Posterior vena cava (tissue), 2 donors: ENCODE measurements at regions of chr12 and their contacts with region 1.

Region 1: DNA sequence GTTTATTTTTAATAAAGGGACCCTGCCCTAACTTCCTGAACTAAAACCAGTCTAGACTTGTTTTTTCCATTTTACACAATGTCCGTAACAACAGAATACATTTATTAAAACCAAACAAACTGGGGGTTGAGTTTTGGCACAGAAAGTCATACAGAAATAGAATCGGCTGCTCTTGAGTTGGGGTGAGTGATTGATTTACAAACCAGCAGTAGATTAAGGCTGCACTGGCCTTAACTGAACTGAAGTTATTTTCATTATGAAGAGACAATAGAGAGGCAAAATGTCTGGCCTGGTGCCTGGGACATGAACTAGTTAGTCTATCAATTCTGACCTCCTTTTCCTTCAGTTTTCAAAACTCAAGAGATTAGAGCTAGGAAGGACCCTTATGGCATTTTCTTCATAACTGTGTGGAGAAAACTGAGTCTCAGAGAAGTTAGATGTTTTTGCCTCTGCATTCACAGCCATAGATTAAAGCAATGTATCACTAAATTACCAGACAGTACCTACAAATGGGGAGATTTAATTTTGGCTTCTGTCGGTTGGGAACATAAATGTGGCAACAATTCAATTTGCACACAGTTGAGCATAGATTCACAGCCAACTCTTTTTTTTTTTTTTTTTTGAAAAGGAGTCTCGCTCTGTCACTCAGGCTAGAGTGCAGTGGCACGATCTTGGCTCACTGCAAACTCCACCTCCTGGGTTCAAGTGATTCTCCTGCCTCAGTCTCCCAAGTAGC is 19.8 kb upstream of the MGP start:
- DNase-seq: no peak

Region 2: GRCh38 chr12:14185427-14186192 is 719.8 kb before region 1 on chr12:
- intact Hi-C with region 1: loop called in 1 of 2 experiments (anchors 5 kb)
- DNase-seq: no peak

Region 3: DNA sequence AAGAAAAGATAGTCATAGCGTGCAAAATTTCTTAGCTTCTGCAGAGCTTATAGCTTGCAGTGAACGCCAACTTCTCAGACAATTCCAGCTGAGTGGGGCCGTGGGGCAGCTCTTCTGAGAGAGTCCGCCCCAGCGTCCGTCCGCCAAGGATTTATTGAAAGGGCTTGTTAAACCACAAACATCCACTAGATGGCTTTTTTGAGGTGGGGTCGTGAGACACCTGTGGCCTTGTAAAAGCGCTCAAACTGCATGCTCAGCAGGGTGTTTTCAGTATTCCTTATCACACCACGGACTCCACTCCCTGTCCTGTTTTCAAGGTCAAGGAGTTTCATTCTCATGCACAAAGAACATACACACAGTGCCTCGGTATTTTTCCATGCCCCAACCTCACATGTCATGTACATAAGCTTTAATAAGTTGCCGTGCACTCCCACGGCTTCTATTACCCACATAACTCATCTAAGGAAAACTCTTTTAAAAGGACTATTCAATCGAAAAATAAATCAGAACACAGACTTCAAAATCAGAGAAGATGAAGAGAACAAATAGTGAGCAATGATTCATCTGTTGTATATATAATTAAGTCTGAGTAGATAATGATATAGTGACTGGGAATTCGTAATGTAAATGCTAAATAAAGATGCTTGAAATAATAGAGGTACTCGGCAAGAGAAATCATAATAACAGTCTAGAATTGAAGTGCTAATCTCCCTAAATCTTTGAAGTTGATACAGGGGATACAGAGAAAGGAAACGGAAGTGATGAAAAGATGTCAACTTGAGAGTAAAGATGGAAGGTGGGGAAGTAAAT is 148.9 kb before region 1 on chr12:
- intact Hi-C with region 1: no loop called
- DNase-seq: no peak

Region 4: DNA sequence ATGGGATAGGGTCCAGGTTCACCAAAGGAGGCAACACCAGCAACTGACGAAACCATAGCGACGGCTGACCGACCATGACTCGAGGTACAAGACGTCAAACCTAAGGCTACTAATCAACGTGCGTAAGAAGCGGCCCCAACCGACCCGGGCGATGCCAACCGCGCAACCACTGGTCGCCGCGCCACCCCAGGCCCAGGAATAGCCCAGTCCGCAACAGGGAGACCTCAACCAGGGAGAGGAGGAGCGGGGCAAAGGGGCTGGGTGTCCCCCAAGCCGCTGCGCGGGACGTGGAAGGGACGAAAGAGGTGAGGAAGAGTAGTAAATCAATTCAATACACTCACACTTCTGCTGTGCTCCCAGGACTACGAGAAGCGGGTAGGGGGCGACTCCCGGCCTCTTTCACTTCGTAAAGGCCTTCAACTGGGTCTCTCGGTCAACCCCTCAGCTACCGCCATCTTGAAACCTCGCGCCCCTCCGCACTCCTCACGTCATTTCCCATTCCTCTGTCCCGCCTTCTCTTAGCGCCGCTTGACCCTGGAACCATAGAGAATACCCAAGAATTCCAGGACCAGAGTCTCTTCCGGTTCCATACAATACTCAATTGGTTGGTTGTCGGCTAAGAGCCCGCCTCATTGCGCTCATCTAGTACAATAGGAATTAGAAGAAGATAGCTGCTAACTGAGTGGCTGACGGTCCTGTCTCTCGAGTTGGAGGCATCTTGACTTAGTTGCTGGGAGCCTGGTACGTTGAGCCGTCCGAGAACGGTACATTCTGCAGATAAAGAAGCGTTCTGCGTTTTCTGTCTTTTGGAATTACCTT is 102.2 kb before region 1 on chr12 and contains the starts of genes C12orf60 and WBP11:
- intact Hi-C with region 1: no loop called
- DNase-seq: peak; percentile 96
- total RNA-seq, gene C12orf60: 0.62 to 0.74 TPM
- total RNA-seq, gene WBP11: 37.2 to 39.2 TPM

Region 5: DNA sequence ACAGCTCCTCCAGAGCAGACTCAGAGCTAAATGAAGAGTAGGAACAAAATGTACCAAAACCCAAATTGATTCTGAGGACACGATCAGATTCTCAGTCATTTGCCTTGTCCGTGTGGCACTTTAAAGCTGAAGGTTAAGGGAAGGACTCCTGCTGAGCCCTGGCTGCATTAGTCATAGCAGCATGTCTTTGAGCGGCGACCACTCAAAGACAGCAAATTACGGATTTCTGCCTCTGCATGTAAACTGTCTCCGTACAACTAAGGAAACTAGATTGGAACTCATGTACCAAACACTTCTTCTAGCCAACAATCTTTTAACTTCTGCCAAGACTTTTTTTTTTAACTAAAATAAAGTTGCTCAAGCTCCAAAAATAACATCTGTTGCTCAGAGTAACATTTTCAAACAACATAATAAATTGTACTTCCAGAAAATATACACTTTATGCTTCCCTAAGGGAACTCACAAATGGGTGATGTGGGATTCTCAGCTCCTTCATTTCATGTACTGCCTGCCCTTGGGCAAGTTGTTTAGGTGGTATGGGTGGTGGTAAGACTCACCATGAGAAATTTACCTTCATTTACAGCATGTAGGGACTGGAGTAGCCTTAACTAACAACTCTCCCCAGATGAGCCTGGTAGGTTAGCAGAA is 259.7 kb after region 1 on chr12:
- intact Hi-C with region 1: no loop called
- DNase-seq: no peak